Endothelial cell of umbilical vein (primary cell): ENCODE measurements at regions of chr7 and their contacts with region 1.

Region 1: DNA sequence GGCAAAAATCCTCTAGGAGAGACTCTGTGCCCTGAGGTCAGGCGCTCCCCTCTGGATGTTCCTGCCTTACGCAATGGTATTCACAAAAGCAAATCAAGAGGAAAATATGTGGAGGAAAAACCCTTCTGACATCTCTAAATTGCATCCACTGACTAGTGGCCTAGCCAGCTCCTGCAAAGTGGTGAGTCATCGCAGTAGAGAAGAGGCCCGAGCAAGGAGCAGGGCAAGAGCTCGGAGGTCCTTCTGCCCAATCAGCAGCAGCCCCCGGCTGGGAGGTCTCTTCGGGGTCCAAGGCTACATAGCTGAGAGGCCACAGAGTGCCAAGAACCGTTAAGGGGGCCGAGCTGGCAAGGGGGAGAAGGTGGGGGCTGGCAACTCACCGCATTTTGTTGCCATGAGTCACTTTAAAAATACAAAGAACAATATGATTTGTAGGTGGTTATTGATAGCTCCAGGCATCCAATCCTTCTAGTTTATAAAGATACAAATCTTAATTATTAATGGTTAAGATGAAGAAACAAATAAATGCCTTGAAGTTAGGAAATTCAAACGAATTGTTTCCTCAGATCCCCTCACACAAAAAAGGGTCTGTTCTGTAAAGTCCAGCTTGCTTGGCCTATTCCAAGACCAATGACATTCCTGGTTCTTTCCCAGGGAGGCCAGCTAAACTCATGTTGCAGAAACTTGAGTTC is 161.6 kb downstream of the PKD1L1 start:
- DNase-seq: peak; percentile 98
- H3K4me3 ChIP-seq: no peak overlapping the region
- H3K27ac ChIP-seq: peak overlapping the region; percentile 100
- H3K4me1 ChIP-seq: peaks cover 51% of the 10 kb centered on the region
- H3K27me3 ChIP-seq: no peaks in the 10 kb centered on the region
- CTCF ChIP-seq: no peak
- POLR2A ChIP-seq: no peak

Region 2: DNA sequence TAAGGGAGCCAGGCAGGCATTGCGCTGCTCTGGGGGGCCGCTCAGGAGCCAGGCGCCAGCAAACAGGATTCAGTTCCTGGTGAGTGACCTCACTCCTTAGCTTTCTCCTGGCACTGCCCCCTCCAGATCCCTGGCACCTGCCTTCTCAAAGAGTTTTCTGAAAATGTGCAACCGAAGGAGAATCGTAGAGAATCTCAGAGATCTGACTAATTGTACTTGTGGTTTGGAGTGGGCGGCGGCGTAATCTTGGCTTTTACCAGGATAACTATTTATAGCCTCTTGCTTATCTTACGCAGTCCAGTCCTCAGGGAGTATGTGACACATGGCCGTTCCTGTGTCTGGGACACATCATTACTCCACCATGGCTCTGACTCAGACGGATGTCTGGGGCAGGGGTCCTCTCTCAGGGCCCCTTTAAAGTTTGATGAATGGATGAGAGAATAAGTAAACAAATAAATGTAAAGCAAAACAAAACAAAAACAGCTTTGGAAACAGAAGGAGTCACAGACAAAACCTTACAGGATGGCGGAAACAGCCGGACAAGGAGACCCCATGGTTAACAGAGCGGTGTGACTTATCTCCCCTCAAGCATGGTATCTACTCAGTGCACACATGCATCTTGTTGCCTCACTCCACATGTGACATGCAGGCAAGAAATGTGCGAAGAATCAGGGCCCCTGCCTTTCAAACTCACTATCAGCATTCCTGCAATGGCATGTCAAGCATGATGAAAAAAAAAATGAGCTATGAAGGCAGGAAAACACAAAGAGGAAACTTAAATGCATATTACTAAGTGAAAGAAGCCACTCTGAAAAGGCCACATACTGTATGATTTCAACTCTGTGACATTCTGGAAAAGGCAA is 304.5 kb before region 1 on chr7:
- CTCF ChIA-PET with region 1: interaction called, 4 read pairs
- POLR2A ChIA-PET with region 1: no interaction called
- dilution Hi-C with region 1: no loop called
- intact Hi-C with region 1: loop called (anchors 1 kb)
- DNase-seq: peak; percentile 83
- H3K4me3 ChIP-seq: no peak overlapping the region
- H3K27ac ChIP-seq: peak overlapping the region; percentile 89
- H3K4me1 ChIP-seq: peaks cover 16% of the 10 kb centered on the region
- H3K27me3 ChIP-seq: no peaks in the 10 kb centered on the region
- CTCF ChIP-seq: no peak
- POLR2A ChIP-seq: peak; percentile 49

Region 3: DNA sequence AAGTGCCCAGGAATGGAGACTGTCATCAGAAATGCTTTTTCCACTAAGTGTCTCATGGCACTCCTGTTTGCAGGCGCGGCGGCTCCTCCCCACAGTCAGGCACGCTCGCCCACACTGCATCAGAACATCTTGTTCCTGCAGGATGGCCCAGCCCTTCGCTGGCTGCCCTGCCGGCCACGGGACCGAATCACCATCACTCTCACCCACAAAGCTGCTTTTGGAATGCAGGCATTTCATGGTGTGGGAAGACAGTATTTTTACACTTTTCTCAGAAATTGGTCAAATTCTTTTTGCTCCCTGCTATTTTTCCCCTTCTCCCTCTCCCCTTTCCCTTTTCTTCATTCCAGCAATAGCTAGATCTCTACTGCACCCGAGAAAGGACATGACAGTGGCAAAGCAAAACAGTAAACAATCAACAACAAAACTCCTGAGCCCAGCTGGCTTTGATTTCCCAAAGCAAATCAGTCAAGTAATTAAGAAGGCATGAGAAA is 28.7 kb before region 1 on chr7:
- CTCF ChIA-PET with region 1: interaction called, 13 read pairs
- POLR2A ChIA-PET with region 1: no interaction called
- dilution Hi-C with region 1: no loop called
- intact Hi-C with region 1: no loop called
- DNase-seq: no peak
- H3K4me3 ChIP-seq: no peak overlapping the region
- H3K27ac ChIP-seq: no peak overlapping the region
- H3K4me1 ChIP-seq: no peaks in the 10 kb centered on the region
- H3K27me3 ChIP-seq: no peaks in the 10 kb centered on the region
- CTCF ChIP-seq: no peak
- POLR2A ChIP-seq: no peak

Region 4: GRCh38 chr7:47846117-47846836 is 59.6 kb after region 1 on chr7:
- CTCF ChIA-PET with region 1: no interaction called
- POLR2A ChIA-PET with region 1: no interaction called
- dilution Hi-C with region 1: no loop called
- intact Hi-C with region 1: loop called (anchors 1 kb)
- DNase-seq: peak; percentile 66
- H3K4me3 ChIP-seq: no peak overlapping the region
- H3K27ac ChIP-seq: peak overlapping the region; percentile 83
- H3K4me1 ChIP-seq: peaks cover 27% of the 10 kb centered on the region
- H3K27me3 ChIP-seq: no peaks in the 10 kb centered on the region
- CTCF ChIP-seq: no peak
- POLR2A ChIP-seq: no peak